Dendritic cell treated with granulocyte-macrophage colony-stimulating factor and Interleukin-4, amounts not matched to agents 40 ng/mL and 50 ng/mL, for 4 days (primary cell): ENCODE measurements at regions of chr7 and their contacts with region 1.

Region 1: GRCh38 chr7:44986218-44987053 is 7.6 kb upstream of the MYO1G start:
- H3K4me3 Mint-ChIP-seq: peak overlapping the region; percentile 94
- H3K27ac Mint-ChIP-seq: peak overlapping the region; percentile 97
- H3K4me1 Mint-ChIP-seq: peaks cover 69% of the 10 kb centered on the region
- H3K27me3 Mint-ChIP-seq: no peaks in the 10 kb centered on the region

Region 2: GRCh38 chr7:44885394-44886317 is 100.8 kb before region 1 on chr7 and contains the start of gene PURB:
- intact Hi-C with region 1: loop called (anchors 10 kb)
- H3K4me3 Mint-ChIP-seq: peak within 1 kb of the TSS; percentile 88
- H3K27ac Mint-ChIP-seq: peak within 1 kb of the TSS; percentile 99
- H3K4me1 Mint-ChIP-seq: peaks cover 49% of the 10 kb centered on the region
- H3K27me3 Mint-ChIP-seq: no peaks in the 10 kb centered on the region

Region 3: DNA sequence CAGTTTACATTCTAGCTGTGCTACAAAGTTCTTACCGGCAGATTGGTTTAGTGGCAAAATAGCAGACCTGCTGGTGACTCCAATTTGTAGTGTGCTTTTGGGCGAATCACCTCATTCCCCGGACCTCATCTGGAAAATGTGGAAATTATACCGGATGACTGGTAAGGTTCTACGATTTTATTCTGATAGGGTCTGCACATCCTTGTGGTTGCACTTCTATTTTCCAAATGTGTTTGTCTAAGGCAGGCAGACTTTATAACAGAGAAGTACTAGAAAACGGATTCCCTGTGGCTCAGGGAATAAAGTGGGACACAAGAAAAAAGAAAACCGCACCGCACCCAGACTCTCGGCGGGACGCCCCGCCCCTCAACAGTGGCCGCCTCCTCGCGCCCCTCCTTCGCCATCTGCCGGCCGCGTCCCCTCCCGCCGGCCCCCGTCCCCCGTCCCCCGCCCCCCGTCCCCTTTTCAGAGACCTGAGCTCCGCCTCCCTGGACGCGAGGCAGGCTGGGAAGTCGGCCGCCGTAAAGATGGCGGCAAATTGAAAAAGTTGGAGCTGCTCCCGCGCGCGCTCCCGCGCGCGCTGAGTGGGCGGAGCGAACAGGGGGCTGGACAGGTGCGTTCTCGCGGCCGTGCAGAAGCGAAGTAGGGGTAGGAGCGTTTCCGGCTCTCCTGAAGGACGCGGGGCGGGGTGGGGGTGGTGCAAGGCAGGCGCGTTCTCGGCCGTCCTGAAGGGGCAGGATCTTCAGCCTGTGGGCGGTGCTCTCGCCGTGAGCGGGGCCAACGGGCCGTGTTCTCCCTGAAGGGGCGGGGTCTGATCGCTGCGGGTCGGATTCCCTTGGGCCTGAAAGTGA is 13.0 kb after region 1 on chr7:
- intact Hi-C with region 1: loop called (anchors 1 kb)
- H3K4me3 Mint-ChIP-seq: peak overlapping the region; percentile 87
- H3K27ac Mint-ChIP-seq: peak overlapping the region; percentile 95
- H3K4me1 Mint-ChIP-seq: peaks cover 43% of the 10 kb centered on the region
- H3K27me3 Mint-ChIP-seq: no peaks in the 10 kb centered on the region

Region 4: GRCh38 chr7:45111298-45112223 is 125.1 kb after region 1 on chr7 and contains the start of gene TBRG4:
- intact Hi-C with region 1: loop called (anchors 5 kb)
- H3K4me3 Mint-ChIP-seq: peak within 1 kb of the TSS; percentile 92
- H3K27ac Mint-ChIP-seq: peak within 1 kb of the TSS; percentile 97
- H3K4me1 Mint-ChIP-seq: peaks cover 44% of the 10 kb centered on the region
- H3K27me3 Mint-ChIP-seq: no peaks in the 10 kb centered on the region